Dendritic cell treated with granulocyte-macrophage colony-stimulating factor and Interleukin-4, amounts not matched to agents 40 ng/mL and 50 ng/mL, for 4 days (primary cell): ENCODE measurements at regions of chr10 and their contacts with region 1.

Region 1: GRCh38 chr10:60646966-60647796 is 131.1 kb upstream of the CDK1 start:
- H3K4me3 Mint-ChIP-seq: no peak overlapping the region
- H3K27ac Mint-ChIP-seq: no peak overlapping the region
- H3K4me1 Mint-ChIP-seq: no peaks in the 10 kb centered on the region
- H3K27me3 Mint-ChIP-seq: no peaks in the 10 kb centered on the region

Region 2: GRCh38 chr10:60099998-60100747 is 547.0 kb before region 1 on chr10:
- intact Hi-C with region 1: loop called (anchors 5 kb)
- H3K4me3 Mint-ChIP-seq: no peak overlapping the region
- H3K27ac Mint-ChIP-seq: no peak overlapping the region
- H3K4me1 Mint-ChIP-seq: no peaks in the 10 kb centered on the region
- H3K27me3 Mint-ChIP-seq: no peaks in the 10 kb centered on the region

Region 3: GRCh38 chr10:60208676-60209269 is 438.4 kb before region 1 on chr10:
- intact Hi-C with region 1: loop called (anchors 5 kb)
- H3K4me3 Mint-ChIP-seq: no peak overlapping the region
- H3K27ac Mint-ChIP-seq: no peak overlapping the region
- H3K4me1 Mint-ChIP-seq: peaks cover 14% of the 10 kb centered on the region
- H3K27me3 Mint-ChIP-seq: no peaks in the 10 kb centered on the region

Region 4: DNA sequence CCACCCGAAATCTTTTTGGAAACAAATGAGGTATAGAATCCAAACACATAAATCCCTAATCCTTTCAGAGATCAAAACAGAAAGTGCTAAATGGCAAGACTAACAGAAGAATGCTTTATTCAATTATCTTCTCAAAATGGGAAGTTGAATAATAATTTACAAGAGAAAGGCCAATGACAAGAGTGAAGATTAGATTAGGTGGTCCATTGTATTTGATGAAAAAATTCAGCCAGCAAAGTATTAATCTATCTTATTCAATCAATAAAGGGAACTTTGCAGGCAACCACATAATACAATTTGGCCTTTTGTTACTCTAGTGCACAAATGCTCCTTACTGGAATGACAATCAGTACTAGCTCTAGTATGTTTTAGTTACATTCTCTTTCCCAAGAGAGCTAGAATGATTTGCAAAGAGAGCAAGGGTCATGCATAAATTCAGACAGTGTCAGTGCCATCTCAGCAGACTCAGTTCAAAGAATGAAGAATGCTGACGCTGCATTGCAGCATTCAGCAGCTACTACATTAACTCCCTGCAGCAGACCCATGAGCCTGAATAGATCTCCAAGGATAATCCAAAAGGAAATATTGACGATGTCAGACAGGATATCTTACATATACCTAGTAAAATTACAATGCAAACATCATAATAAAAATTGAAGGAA is 389.3 kb before region 1 on chr10:
- intact Hi-C with region 1: no loop called
- H3K4me3 Mint-ChIP-seq: no peak overlapping the region
- H3K27ac Mint-ChIP-seq: no peak overlapping the region
- H3K4me1 Mint-ChIP-seq: peaks cover 5% of the 10 kb centered on the region
- H3K27me3 Mint-ChIP-seq: no peaks in the 10 kb centered on the region

Region 5: DNA sequence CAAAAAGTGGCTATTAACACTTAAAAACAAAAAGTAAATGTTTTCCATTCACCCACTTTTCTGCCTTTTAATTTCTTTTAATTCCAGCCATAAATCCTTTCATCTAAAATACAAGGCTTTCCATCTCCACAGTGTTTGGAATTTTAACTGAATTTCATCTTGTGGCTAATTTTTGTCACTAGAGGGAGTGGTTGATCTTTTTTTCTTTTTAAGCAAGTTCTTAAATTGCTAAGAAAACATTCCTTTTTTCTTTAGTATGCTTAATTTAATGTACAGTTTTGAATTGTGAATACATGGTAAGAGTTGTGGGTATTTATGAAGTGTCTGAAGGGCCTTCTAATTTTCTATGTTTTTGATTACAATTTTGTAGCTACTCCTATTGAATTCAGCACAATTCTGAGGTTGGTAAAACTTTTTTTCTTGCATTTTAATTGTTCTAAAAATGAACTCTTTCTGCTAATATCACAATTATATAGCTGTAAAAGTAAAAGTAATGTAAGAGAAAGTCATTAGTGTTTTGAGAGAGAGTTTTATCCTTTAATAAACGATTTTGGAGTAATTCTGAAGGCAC is 202.6 kb before region 1 on chr10:
- intact Hi-C with region 1: loop called (anchors 1 kb)
- H3K4me3 Mint-ChIP-seq: no peak overlapping the region
- H3K27ac Mint-ChIP-seq: no peak overlapping the region
- H3K4me1 Mint-ChIP-seq: peaks cover 9% of the 10 kb centered on the region
- H3K27me3 Mint-ChIP-seq: peaks cover 2% of the 10 kb centered on the region

Region 6: GRCh38 chr10:60572511-60573194 is 74.5 kb before region 1 on chr10:
- intact Hi-C with region 1: no loop called
- H3K4me3 Mint-ChIP-seq: peak overlapping the region; percentile 79
- H3K27ac Mint-ChIP-seq: peak overlapping the region; percentile 68
- H3K4me1 Mint-ChIP-seq: peaks cover 10% of the 10 kb centered on the region
- H3K27me3 Mint-ChIP-seq: peaks cover 13% of the 10 kb centered on the region